PC-3 (cell line): ENCODE measurements at regions of chr15 and their contacts with region 1.

Region 1: DNA sequence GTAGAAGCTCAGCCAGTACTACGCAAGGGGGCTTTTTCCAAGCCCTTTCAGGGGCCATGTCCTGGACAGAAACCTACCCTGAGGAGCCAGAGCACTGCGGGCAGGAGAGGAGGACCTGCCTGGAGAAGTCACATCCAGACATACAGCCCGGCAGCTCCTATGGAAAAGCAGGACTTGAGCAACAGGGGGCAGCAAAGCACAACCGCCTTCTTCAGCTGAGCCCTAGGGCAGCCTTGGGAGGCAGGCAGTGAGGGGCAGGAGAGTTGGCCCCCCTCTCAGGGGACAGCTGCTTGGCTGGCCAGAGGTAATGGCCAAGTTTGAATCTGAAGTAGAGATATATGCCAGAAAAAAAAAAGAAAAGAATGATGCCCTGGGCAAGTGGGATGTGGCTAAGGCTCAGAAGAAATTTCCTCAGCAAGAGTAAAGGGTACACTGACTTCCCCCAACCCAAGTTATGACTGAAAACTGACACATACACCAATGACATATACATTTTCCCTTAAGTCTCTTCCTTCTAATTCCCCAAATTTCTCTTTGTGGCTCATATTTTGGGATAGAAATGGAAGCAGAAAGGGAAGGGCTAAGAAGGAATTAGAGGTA is 56.9 kb downstream of the CYP19A1 start:
- DNase-seq: peak; percentile 63
- ATAC-seq: peak; percentile 90
- H3K4me3 ChIP-seq: no peak overlapping the region
- H3K27ac ChIP-seq: no peak overlapping the region
- H3K4me1 ChIP-seq: no peaks in the 10 kb centered on the region
- H3K27me3 ChIP-seq: peaks cover 33% of the 10 kb centered on the region
- CTCF ChIP-seq: peak; percentile 70

Region 2: DNA sequence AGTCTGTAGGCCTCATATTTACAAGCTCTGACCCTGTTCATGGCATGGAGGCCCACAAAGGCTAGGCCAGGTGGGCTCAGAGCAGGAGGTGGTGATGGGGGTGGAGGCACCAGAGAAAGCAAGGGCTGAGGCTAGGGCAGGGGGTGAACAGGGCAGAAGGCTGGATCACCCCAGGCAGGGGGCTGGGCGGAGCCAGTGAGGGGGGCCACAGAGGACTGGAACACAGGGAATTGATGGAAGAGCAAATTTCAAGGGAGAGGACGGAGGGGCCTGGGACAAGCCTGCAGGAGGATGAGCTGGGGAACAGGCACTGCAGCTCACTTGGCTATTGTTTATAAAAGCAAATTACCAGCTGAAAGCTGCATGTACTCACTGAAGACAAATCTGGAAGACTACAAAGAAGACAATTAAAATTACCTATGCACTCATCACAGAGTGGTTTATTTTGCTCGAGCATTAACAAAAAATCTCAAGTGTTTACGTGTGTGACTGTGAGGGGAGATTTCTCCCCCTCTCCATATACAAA is 197.8 kb before region 1 on chr15:
- CTCF ChIA-PET with region 1: no interaction called
- POLR2A ChIA-PET with region 1: no interaction called
- intact Hi-C with region 1: no loop called
- DNase-seq: no peak
- ATAC-seq: no peak
- H3K4me3 ChIP-seq: no peak overlapping the region
- H3K27ac ChIP-seq: no peak overlapping the region
- H3K4me1 ChIP-seq: 0 out of 2 replicates have a peak, but pooled peaks cover 12% of the 10 kb centered on the region
- H3K27me3 ChIP-seq: no peaks in the 10 kb centered on the region
- CTCF ChIP-seq: no peak

Region 3: DNA sequence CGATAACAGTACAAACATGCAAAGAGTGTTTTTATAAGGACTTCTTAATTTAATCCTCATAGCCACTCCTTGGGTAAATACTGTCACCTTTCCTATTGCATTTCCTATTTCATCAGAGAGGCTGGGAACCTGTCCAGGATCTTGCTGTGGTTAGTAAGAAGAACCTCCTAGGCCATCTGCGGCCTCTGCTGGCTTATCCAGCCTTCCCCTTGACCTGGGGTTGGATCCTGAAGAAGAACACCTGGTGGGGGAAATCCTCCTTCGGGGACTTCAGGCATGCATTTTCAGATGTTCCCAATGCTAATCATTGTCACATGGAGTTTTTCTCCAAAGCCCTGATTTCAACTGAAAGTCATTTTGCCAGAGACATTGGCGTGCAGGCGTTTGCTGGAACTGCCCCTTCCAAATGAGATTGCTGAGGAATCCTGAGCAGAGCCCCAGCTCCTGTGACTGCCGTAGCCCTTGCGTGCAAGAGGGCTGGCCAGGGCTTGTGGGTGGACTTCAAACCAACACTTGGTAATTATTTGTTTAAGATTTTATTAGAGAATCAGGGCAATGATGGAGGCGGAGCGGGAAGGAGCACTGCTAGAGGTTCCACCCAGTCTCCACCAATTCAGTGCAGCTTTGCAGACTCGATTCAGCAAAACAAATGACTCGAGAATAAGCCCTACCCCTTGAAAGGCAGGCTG is 85.6 kb after region 1 on chr15:
- CTCF ChIA-PET with region 1: interaction called, 4 read pairs
- POLR2A ChIA-PET with region 1: no interaction called
- intact Hi-C with region 1: loop called (anchors 5 kb)
- DNase-seq: peak; percentile 83
- ATAC-seq: peak; percentile 65
- H3K4me3 ChIP-seq: peak overlapping the region; percentile 30; the same call in 1 of the 2 replicates
- H3K27ac ChIP-seq: peak overlapping the region; percentile 95
- H3K4me1 ChIP-seq: peaks cover 46% of the 10 kb centered on the region
- H3K27me3 ChIP-seq: no peaks in the 10 kb centered on the region
- CTCF ChIP-seq: 0 out of 2 replicates have a peak, but pooled peaks have one; percentile 27

Region 4: GRCh38 chr15:51499379-51499976 is 218.0 kb after region 1 on chr15:
- CTCF ChIA-PET with region 1: no interaction called
- POLR2A ChIA-PET with region 1: no interaction called
- intact Hi-C with region 1: loop called (anchors 5 kb)
- DNase-seq: peak; percentile 60
- ATAC-seq: peak; percentile 71
- H3K4me3 ChIP-seq: no peak overlapping the region
- H3K27ac ChIP-seq: no peak overlapping the region
- H3K4me1 ChIP-seq: peaks cover 12% of the 10 kb centered on the region
- H3K27me3 ChIP-seq: no peaks in the 10 kb centered on the region
- CTCF ChIP-seq: peak; percentile 77